HepG2 (cell line): ENCODE measurements at regions of chr3 and their contacts with region 1.

Region 1: GRCh38 chr3:171566803-171567422 is 106.7 kb upstream of the TNIK start:
- DNase-seq: peak; percentile 41
- ATAC-seq: peak; percentile 53; the same call in 2 of the 3 replicates
- H3K4me3 ChIP-seq: no peak overlapping the region
- H3K27ac ChIP-seq: no peak overlapping the region
- H3K4me1 ChIP-seq: peaks cover 15% of the 10 kb centered on the region
- H3K27me3 ChIP-seq: no peaks in the 10 kb centered on the region
- CTCF ChIP-seq: peak; percentile 75
- EP300 ChIP-seq: no peak
- POLR2A ChIP-seq: no peak
- RAD21 ChIP-seq: peak; percentile 68

Region 2: GRCh38 chr3:171187706-171188290 is 379.1 kb before region 1 on chr3:
- CTCF ChIA-PET with region 1: interaction called, 19 read pairs
- POLR2A ChIA-PET with region 1: no interaction called
- in situ Hi-C with region 1: loop called (anchors 5 kb)
- intact Hi-C with region 1: loop called (anchors 1 kb)
- DNase-seq: peak; percentile 47
- ATAC-seq: peak; percentile 90
- H3K4me3 ChIP-seq: no peak overlapping the region
- H3K27ac ChIP-seq: no peak overlapping the region
- H3K4me1 ChIP-seq: peaks cover 21% of the 10 kb centered on the region
- H3K27me3 ChIP-seq: no peaks in the 10 kb centered on the region
- CTCF ChIP-seq: peak; percentile 78
- EP300 ChIP-seq: no peak
- POLR2A ChIP-seq: no peak
- RAD21 ChIP-seq: 0 out of 2 replicates have a peak, but pooled peaks have one; percentile 17

Region 3: DNA sequence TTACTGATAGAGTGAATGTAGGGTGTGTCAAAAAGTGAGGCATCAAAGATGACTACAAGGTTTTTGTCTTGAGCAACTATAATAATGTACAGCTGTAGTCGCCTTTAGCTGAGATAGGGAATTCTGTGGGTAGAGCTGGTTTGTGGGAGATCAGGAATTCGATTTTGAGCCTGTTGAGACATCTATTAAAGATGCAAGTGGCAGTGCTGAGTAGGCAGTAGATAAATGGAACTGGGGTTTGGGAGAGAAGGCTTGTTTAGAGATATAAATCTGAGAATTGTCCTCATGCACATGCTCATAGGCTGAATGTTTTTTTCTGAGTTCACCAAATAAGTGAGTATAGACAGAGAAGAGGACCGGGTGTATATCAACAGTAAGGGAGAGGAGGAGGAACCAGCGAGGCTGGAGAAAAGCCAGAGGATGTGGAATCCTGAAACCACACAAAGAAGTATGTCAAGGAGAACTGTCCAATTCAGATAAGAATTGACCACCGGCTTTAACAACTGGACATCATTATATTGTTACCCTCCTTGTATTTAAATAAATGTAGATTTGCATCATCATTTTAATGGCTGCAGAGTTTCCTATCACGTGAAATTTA is 39.3 kb after region 1 on chr3:
- CTCF ChIA-PET with region 1: no interaction called
- POLR2A ChIA-PET with region 1: no interaction called
- in situ Hi-C with region 1: no loop called
- intact Hi-C with region 1: no loop called
- DNase-seq: no peak
- ATAC-seq: no peak
- H3K4me3 ChIP-seq: no peak overlapping the region
- H3K27ac ChIP-seq: no peak overlapping the region
- H3K4me1 ChIP-seq: no peaks in the 10 kb centered on the region
- H3K27me3 ChIP-seq: no peaks in the 10 kb centered on the region
- CTCF ChIP-seq: no peak
- EP300 ChIP-seq: no peak
- POLR2A ChIP-seq: no peak
- RAD21 ChIP-seq: no peak

Region 4: GRCh38 chr3:171685116-171685895 is 118.4 kb after region 1 on chr3:
- CTCF ChIA-PET with region 1: no interaction called
- POLR2A ChIA-PET with region 1: no interaction called
- in situ Hi-C with region 1: no loop called
- intact Hi-C with region 1: no loop called
- DNase-seq: no peak
- ATAC-seq: no peak
- H3K4me3 ChIP-seq: no peak overlapping the region
- H3K27ac ChIP-seq: no peak overlapping the region
- H3K4me1 ChIP-seq: peaks cover 22% of the 10 kb centered on the region
- H3K27me3 ChIP-seq: no peaks in the 10 kb centered on the region
- CTCF ChIP-seq: no peak
- EP300 ChIP-seq: no peak
- POLR2A ChIP-seq: no peak
- RAD21 ChIP-seq: no peak